ENCODE measurements at regions of chr5 and their contacts with region 1.

Region 1: GRCh38 chr5:56200856-56201666 is 32.1 kb downstream of the ANKRD55 start:
- DNase-seq: peak; percentile 11 to 80 (median 49)
- ATAC-seq: peak; percentile 91
- H3K4me3 ChIP-seq: no peak overlapping the region
- H3K4me3 Mint-ChIP-seq: no peak overlapping the region
- H3K27ac ChIP-seq: no peak overlapping the region
- H3K27ac Mint-ChIP-seq: no peak overlapping the region
- H3K4me1 ChIP-seq: peaks cover 6% of the 10 kb centered on the region
- H3K4me1 Mint-ChIP-seq: peaks cover 3% of the 10 kb centered on the region
- H3K27me3 ChIP-seq: no peaks in the 10 kb centered on the region
- H3K27me3 Mint-ChIP-seq: no peaks in the 10 kb centered on the region
- CTCF ChIP-seq: peak; percentile 71

Region 2: GRCh38 chr5:55344392-55344992 is 856.6 kb before region 1 on chr5:
- CTCF ChIA-PET with region 1: no interaction called
- POLR2A ChIA-PET with region 1: no interaction called
- intact Hi-C with region 1: loop called in 1 of 2 experiments (anchors 5 kb)
- DNase-seq: peak; percentile 36 to 73 (median 64)
- ATAC-seq: peak; percentile 76
- H3K4me3 ChIP-seq: no peak overlapping the region
- H3K4me3 Mint-ChIP-seq: no peak overlapping the region
- H3K27ac ChIP-seq: no peak overlapping the region
- H3K27ac Mint-ChIP-seq: no peak overlapping the region
- H3K4me1 ChIP-seq: no peaks in the 10 kb centered on the region
- H3K4me1 Mint-ChIP-seq: no peaks in the 10 kb centered on the region
- H3K27me3 ChIP-seq: no peaks in the 10 kb centered on the region
- H3K27me3 Mint-ChIP-seq: no peaks in the 10 kb centered on the region
- CTCF ChIP-seq: peak; percentile 97

Region 3: DNA sequence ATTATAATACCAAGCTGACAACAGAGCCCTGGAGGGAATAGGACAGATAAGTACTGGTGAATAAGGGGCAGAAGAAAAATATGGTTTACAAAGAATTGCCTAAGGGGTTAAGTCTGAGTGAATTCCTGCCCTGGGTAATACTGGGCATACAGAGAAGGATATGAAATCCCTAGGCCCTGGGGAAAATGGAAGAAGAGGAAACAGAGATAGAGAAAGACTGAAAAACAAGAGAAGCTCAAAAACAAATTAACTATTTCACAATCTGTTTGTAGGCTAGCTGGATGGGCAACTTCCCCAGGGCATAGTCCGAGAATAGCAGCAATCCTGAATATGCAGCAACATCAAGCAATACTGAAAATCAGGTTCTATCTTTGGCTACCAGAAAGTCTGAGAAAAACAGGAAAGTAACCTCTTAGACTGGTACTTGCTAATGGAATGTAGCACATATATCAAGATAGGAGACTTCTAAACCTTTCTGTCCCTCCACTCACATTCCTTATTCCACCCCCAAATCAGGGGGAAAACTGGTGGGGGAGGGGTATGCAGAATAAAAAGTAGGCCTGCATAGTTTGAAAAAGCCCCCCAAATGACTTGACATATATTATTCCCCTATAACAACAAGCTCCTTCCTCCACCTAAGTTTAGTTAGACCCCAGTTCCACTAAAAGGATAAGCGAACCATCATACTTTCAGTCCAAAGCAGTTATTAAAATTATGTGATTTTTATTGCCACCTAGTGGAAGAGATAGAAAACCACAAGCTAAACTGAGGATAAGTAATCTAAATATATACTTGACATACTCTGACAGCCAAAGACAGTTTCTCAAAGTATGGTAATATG is 509.6 kb before region 1 on chr5:
- CTCF ChIA-PET with region 1: no interaction called
- POLR2A ChIA-PET with region 1: no interaction called
- intact Hi-C with region 1: loop called in 1 of 2 experiments (anchors 5 kb)
- DNase-seq: peak in 2 of 9 experiments; percentile 33 to 52
- ATAC-seq: peak; percentile 65
- H3K4me3 ChIP-seq: no peak overlapping the region
- H3K4me3 Mint-ChIP-seq: no peak overlapping the region
- H3K27ac ChIP-seq: no peak overlapping the region
- H3K27ac Mint-ChIP-seq: no peak overlapping the region
- H3K4me1 ChIP-seq: no peaks in the 10 kb centered on the region
- H3K4me1 Mint-ChIP-seq: peaks cover 2% of the 10 kb centered on the region
- H3K27me3 ChIP-seq: no peaks in the 10 kb centered on the region
- H3K27me3 Mint-ChIP-seq: no peaks in the 10 kb centered on the region
- CTCF ChIP-seq: peak; percentile 62

Region 4: GRCh38 chr5:55711968-55712859 is 488.8 kb before region 1 on chr5 and contains the start of gene SLC38A9:
- CTCF ChIA-PET with region 1: no interaction called
- POLR2A ChIA-PET with region 1: no interaction called
- intact Hi-C with region 1: loop called in 1 of 2 experiments (anchors 10 kb)
- DNase-seq: peak; percentile 83 to 94 (median 91)
- ATAC-seq: peak; percentile 99
- H3K4me3 ChIP-seq: peak within 1 kb of the TSS; percentile 92 to 100
- H3K4me3 Mint-ChIP-seq: peak within 1 kb of the TSS; percentile 98
- H3K27ac ChIP-seq: peak within 1 kb of the TSS; percentile 54 to 73
- H3K27ac Mint-ChIP-seq: peak within 1 kb of the TSS; percentile 88
- H3K4me1 ChIP-seq: peaks cover 9% of the 10 kb centered on the region
- H3K4me1 Mint-ChIP-seq: peaks cover 31% of the 10 kb centered on the region
- H3K27me3 ChIP-seq: no peaks in the 10 kb centered on the region
- H3K27me3 Mint-ChIP-seq: peaks cover 3% of the 10 kb centered on the region
- CTCF ChIP-seq: no peak
- total RNA-seq, gene SLC38A9: 6.0 to 6.8 TPM

Region 5: GRCh38 chr5:55936100-55936693 is 264.9 kb before region 1 on chr5:
- CTCF ChIA-PET with region 1: interaction called, 72 read pairs
- POLR2A ChIA-PET with region 1: no interaction called
- intact Hi-C with region 1: loop called (anchors 1 kb)
- DNase-seq: peak; percentile 53 to 87 (median 80)
- ATAC-seq: peak; percentile 92
- H3K4me3 ChIP-seq: no peak overlapping the region
- H3K4me3 Mint-ChIP-seq: no peak overlapping the region
- H3K27ac ChIP-seq: no peak overlapping the region
- H3K27ac Mint-ChIP-seq: peak overlapping the region; percentile 55
- H3K4me1 ChIP-seq: no peaks in the 10 kb centered on the region
- H3K4me1 Mint-ChIP-seq: peaks cover 10% of the 10 kb centered on the region
- H3K27me3 ChIP-seq: no peaks in the 10 kb centered on the region
- H3K27me3 Mint-ChIP-seq: no peaks in the 10 kb centered on the region
- CTCF ChIP-seq: peak; percentile 86

Region 6: DNA sequence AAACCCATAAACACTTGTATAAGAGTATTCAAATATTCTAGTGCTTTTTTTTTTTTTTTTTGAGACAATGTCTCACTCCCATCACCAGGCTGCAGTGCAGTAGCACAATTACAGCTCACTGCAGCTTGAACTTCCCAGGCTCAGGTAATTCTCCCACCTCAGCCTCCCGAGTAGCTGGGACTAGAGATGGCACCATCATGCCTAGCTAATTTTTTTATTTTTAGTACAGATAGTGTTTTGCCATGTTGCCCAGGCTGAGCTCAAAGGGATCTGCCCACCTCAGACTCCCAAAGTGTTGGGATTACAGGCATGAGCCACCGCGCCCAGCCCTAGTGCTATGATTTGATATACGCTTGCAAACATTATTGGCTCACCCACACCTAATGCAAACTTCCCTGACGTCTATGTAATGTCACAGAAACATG is 218.1 kb before region 1 on chr5:
- CTCF ChIA-PET with region 1: interaction called, 91 read pairs
- POLR2A ChIA-PET with region 1: interaction called, 7 read pairs
- intact Hi-C with region 1: loop called (anchors 1 kb)
- DNase-seq: peak in 4 of 9 experiments; percentile 18 to 62 (median 42)
- ATAC-seq: peak; percentile 35
- H3K4me3 ChIP-seq: no peak overlapping the region
- H3K4me3 Mint-ChIP-seq: peak overlapping the region; percentile 59
- H3K27ac ChIP-seq: no peak overlapping the region
- H3K27ac Mint-ChIP-seq: peak overlapping the region; percentile 64
- H3K4me1 ChIP-seq: peaks cover 56% of the 10 kb centered on the region
- H3K4me1 Mint-ChIP-seq: peaks cover 69% of the 10 kb centered on the region
- H3K27me3 ChIP-seq: no peaks in the 10 kb centered on the region
- H3K27me3 Mint-ChIP-seq: no peaks in the 10 kb centered on the region
- CTCF ChIP-seq: peak; percentile 50

Region 7: GRCh38 chr5:56056875-56057274 is 144.2 kb before region 1 on chr5:
- CTCF ChIA-PET with region 1: interaction called, 5 read pairs
- POLR2A ChIA-PET with region 1: no interaction called
- intact Hi-C with region 1: loop called in 1 of 2 experiments (anchors 5 kb)
- DNase-seq: no peak
- ATAC-seq: no peak
- H3K4me3 ChIP-seq: no peak overlapping the region
- H3K4me3 Mint-ChIP-seq: no peak overlapping the region
- H3K27ac ChIP-seq: no peak overlapping the region
- H3K27ac Mint-ChIP-seq: peak overlapping the region; percentile 89
- H3K4me1 ChIP-seq: peaks cover 87% of the 10 kb centered on the region
- H3K4me1 Mint-ChIP-seq: peaks cover 75% of the 10 kb centered on the region
- H3K27me3 ChIP-seq: no peaks in the 10 kb centered on the region
- H3K27me3 Mint-ChIP-seq: no peaks in the 10 kb centered on the region
- CTCF ChIP-seq: no peak

Region 8: DNA sequence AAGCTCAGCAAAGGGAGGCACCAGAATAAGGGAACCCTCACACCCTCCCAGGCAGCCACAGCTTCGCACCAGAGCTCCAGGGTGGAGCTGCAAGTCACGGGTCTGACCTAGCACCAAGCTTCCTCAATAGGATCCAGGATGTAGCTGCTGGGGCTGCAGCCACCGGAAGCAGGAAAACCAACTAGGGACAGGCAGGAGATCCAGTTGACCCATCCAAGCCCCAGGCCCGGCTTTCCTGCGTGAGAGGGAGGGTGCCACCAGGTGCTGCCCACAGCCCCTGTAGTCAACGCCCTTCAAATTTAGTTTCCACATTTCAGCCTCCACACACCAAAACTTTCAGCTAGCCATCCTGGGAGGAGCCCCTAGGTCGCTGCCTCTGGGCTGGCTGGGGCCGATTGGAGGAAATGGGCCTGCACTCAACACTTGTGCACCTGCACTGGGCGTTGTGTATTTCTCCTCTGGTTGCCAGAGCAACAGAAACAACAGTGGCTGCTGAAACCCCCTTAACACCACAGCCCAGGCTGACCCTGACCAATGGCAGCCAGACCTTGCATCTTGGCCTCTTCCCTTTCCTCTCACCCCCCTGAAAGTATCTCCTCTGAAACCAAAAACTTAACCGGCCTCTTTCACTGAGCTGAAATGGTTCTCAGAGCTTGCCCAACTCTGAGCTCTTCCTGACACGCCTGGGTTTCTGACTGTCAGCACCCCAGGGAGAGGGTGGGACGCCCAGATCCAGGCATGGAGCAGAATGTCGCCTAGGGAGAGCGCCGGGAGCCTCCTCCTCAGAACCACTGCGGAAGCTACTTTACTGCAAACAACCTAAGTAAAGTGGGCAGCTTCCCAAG is 387.8 kb after region 1 on chr5:
- CTCF ChIA-PET with region 1: no interaction called
- POLR2A ChIA-PET with region 1: no interaction called
- intact Hi-C with region 1: no loop called
- DNase-seq: peak in 8 of 9 experiments; percentile 32 to 86 (median 58)
- ATAC-seq: peak; percentile 85
- H3K4me3 ChIP-seq: no peak overlapping the region
- H3K4me3 Mint-ChIP-seq: peak overlapping the region; percentile 40
- H3K27ac ChIP-seq: peak overlapping the region; percentile 32 to 80
- H3K27ac Mint-ChIP-seq: peak overlapping the region; percentile 85
- H3K4me1 ChIP-seq: peaks cover 34% of the 10 kb centered on the region
- H3K4me1 Mint-ChIP-seq: peaks cover 42% of the 10 kb centered on the region
- H3K27me3 ChIP-seq: no peaks in the 10 kb centered on the region
- H3K27me3 Mint-ChIP-seq: no peaks in the 10 kb centered on the region
- CTCF ChIP-seq: no peak

Region 9: DNA sequence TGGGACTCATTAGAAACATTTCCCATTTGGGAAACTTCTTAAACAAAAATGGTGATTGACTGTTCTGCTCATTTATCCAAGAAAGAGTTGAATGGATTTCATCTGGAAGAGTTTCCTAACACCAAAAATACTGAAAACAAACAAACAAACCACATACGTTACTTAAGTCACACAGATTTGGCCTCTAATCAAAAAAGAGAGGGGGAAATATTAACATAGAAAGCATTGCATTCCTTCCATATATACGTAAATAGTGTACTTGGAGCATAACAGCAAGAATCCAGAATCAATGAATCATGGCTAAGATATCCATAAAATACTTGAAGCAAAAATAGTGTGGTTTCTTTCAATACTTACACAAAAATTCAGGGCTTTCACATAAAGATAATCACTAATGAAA is 424.5 kb after region 1 on chr5:
- CTCF ChIA-PET with region 1: no interaction called
- POLR2A ChIA-PET with region 1: no interaction called
- intact Hi-C with region 1: no loop called
- DNase-seq: no peak
- ATAC-seq: no peak
- H3K4me3 ChIP-seq: no peak overlapping the region
- H3K4me3 Mint-ChIP-seq: no peak overlapping the region
- H3K27ac ChIP-seq: no peak overlapping the region
- H3K27ac Mint-ChIP-seq: no peak overlapping the region
- H3K4me1 ChIP-seq: no peaks in the 10 kb centered on the region
- H3K4me1 Mint-ChIP-seq: no peaks in the 10 kb centered on the region
- H3K27me3 ChIP-seq: no peaks in the 10 kb centered on the region
- H3K27me3 Mint-ChIP-seq: peaks cover 2% of the 10 kb centered on the region
- CTCF ChIP-seq: no peak

Measured in CD8-positive, alpha-beta T cell (primary cell).